Cardiac septum (tissue), 1 donor: ENCODE measurements at regions of chr7 and their contacts with region 1.

Region 1: DNA sequence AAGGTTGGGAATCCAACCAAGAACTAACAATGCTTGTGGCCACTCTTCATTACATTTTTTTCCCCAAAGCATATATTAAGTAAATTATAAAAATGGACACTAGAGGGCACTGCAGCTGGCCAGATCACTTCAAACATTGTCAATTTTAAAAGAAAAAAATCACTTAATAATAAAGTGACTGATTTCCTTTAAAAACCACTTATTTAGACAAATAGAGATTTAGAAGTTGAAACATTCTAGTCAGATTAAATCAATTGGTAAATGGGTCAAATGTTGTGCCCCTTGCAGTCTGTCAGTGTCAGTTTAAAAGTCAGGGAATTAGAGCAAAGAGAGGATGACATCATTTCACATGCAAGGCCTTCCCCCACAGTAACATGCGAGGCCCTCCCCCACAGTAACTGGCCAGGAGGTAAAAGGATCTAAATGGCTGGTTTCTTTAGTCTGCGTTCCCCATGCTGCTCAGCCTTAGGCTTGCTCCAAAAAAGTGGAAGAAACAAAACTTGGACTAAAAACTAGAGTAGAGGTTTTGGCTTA is 177.9 kb downstream of the SKAP2 start:
- DNase-seq: no peak

Region 2: DNA sequence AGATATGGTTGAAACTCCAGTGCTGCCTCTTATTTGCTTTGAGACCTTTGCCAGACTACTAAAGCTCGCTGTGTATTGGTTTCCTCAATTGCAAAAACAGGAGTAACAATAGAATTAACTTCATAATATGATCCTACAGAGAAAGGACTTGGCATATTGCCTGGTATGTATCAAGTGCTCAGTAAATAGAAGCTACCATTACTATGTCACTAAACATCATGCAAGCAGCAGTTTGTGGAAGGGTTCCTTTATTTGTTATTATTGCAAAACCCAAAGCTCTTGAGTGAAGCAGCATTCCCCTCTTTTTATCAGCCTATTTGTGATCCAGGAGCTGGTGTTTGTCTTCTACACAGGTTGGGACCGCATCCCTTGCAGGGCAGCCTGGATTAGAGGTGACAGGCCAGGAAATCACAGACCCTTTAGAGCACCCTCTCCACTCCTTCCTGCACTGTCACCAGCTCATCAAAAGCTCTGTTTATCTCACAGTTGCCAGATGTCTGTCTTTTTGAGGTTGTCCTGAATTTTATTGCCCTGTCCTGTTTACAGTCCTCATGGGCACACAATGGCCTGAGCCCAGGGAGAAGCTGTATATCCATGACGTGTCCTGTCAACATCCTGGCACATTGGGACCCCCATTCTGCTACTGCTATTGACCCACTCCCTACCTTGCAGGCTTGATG is 273.4 kb before region 1 on chr7:
- intact Hi-C with region 1: no loop called
- DNase-seq: no peak

Region 3: GRCh38 chr7:26699766-26700165 is 13.3 kb after region 1 on chr7:
- intact Hi-C with region 1: no loop called
- DNase-seq: no peak

Region 4: GRCh38 chr7:27160546-27161213 is 474.2 kb after region 1 on chr7:
- intact Hi-C with region 1: loop called (anchors 2 kb)
- DNase-seq: peak; percentile 92